PC-3 (cell line): ENCODE measurements at regions of chr6 and their contacts with region 1.

Region 1: DNA sequence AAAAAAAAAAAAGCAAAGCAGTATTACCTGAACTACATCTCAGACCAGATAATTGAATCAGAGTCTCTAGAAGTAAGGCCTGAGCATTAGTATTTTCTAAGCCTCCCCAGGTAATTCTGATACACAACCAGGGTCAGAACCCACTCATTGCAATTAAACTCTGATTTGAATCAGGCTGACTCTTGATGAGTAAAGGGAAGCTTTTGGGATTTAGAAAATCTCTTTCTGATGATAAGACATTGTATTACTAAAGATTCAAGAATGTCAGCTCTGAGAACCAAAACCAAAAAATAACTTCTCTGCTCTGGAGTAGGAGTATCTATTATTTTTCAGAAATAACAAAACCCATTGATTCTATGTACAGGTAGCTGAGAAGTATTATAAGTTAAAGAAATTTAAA is 100.1 kb upstream of the COL21A1 start:
- DNase-seq: peak; percentile 58
- ATAC-seq: no peak
- H3K4me3 ChIP-seq: no peak overlapping the region
- H3K27ac ChIP-seq: no peak overlapping the region
- H3K4me1 ChIP-seq: peaks cover 24% of the 10 kb centered on the region
- H3K27me3 ChIP-seq: no peaks in the 10 kb centered on the region
- CTCF ChIP-seq: no peak

Region 2: GRCh38 chr6:56335726-56336125 is 11.8 kb before region 1 on chr6:
- CTCF ChIA-PET with region 1: no interaction called
- POLR2A ChIA-PET with region 1: no interaction called
- intact Hi-C with region 1: loop called (anchors 2 kb)
- DNase-seq: peak; percentile 95
- ATAC-seq: peak; percentile 81
- H3K4me3 ChIP-seq: peak overlapping the region; percentile 8; the same call in 1 of the 2 replicates
- H3K27ac ChIP-seq: peak overlapping the region; percentile 99
- H3K4me1 ChIP-seq: peaks cover 24% of the 10 kb centered on the region
- H3K27me3 ChIP-seq: no peaks in the 10 kb centered on the region
- CTCF ChIP-seq: no peak